ENCODE measurements at regions of chr9 and their contacts with region 1.

Region 1: GRCh38 chr9:34500623-34501267 is 22.0 kb downstream of the ENHO start:
- DNase-seq: peak; percentile 9
- H3K4me3 ChIP-seq: no peak overlapping the region
- CTCF ChIP-seq: peak; percentile 99

Region 2: GRCh38 chr9:34428325-34428958 is 72.3 kb before region 1 on chr9:
- in situ Hi-C with region 1: loop called (anchors 10 kb)
- DNase-seq: peak; percentile 53
- H3K4me3 ChIP-seq: no peak overlapping the region
- CTCF ChIP-seq: no peak

Region 3: GRCh38 chr9:34611829-34612630 is 111.3 kb after region 1 on chr9 and contains the start of gene RPP25L:
- in situ Hi-C with region 1: loop called (anchors 10 kb)
- DNase-seq: peak; percentile 28
- H3K4me3 ChIP-seq: peak within 1 kb of the TSS; percentile 79
- CTCF ChIP-seq: no peak

Measured in astrocyte of the cerebellum (primary cell).